ENCODE measurements at regions of chr14 and their contacts with region 1.

Region 1: GRCh38 chr14:106417224-106418049 is 891.1 kb downstream of the TMEM121 start:
- DNase-seq: peak; percentile 88
- H3K4me3 Mint-ChIP-seq: no peak overlapping the region
- H3K27ac Mint-ChIP-seq: no peak overlapping the region
- H3K4me1 Mint-ChIP-seq: peaks cover 7% of the 10 kb centered on the region
- H3K27me3 Mint-ChIP-seq: peaks cover 16% of the 10 kb centered on the region

Region 2: GRCh38 chr14:106308839-106309389 is 108.5 kb before region 1 on chr14:
- CTCF ChIA-PET with region 1: interaction called, 13 read pairs
- POLR2A ChIA-PET with region 1: no interaction called
- DNase-seq: peak; percentile 88
- H3K4me3 Mint-ChIP-seq: peak overlapping the region; percentile 43
- H3K27ac Mint-ChIP-seq: peak overlapping the region; percentile 61
- H3K4me1 Mint-ChIP-seq: no peaks in the 10 kb centered on the region
- H3K27me3 Mint-ChIP-seq: peaks cover 50% of the 10 kb centered on the region

Region 3: GRCh38 chr14:106378191-106378590 is 39.2 kb before region 1 on chr14:
- CTCF ChIA-PET with region 1: interaction called, 58 read pairs
- POLR2A ChIA-PET with region 1: no interaction called
- DNase-seq: peak; percentile 41
- H3K4me3 Mint-ChIP-seq: no peak overlapping the region
- H3K27ac Mint-ChIP-seq: no peak overlapping the region
- H3K4me1 Mint-ChIP-seq: peaks cover 20% of the 10 kb centered on the region
- H3K27me3 Mint-ChIP-seq: peaks cover 26% of the 10 kb centered on the region

Region 4: GRCh38 chr14:106436310-106436905 is 19.0 kb after region 1 on chr14:
- CTCF ChIA-PET with region 1: interaction called, 12 read pairs
- POLR2A ChIA-PET with region 1: no interaction called
- DNase-seq: peak; percentile 74
- H3K4me3 Mint-ChIP-seq: no peak overlapping the region
- H3K27ac Mint-ChIP-seq: no peak overlapping the region
- H3K4me1 Mint-ChIP-seq: peaks cover 8% of the 10 kb centered on the region
- H3K27me3 Mint-ChIP-seq: peaks cover 34% of the 10 kb centered on the region

Region 5: GRCh38 chr14:106501898-106502297 is 84.5 kb after region 1 on chr14:
- CTCF ChIA-PET with region 1: interaction called, 90 read pairs
- POLR2A ChIA-PET with region 1: no interaction called
- DNase-seq: no peak
- H3K4me3 Mint-ChIP-seq: no peak overlapping the region
- H3K27ac Mint-ChIP-seq: no peak overlapping the region
- H3K4me1 Mint-ChIP-seq: peaks cover 13% of the 10 kb centered on the region
- H3K27me3 Mint-ChIP-seq: peaks cover 21% of the 10 kb centered on the region

Region 6: DNA sequence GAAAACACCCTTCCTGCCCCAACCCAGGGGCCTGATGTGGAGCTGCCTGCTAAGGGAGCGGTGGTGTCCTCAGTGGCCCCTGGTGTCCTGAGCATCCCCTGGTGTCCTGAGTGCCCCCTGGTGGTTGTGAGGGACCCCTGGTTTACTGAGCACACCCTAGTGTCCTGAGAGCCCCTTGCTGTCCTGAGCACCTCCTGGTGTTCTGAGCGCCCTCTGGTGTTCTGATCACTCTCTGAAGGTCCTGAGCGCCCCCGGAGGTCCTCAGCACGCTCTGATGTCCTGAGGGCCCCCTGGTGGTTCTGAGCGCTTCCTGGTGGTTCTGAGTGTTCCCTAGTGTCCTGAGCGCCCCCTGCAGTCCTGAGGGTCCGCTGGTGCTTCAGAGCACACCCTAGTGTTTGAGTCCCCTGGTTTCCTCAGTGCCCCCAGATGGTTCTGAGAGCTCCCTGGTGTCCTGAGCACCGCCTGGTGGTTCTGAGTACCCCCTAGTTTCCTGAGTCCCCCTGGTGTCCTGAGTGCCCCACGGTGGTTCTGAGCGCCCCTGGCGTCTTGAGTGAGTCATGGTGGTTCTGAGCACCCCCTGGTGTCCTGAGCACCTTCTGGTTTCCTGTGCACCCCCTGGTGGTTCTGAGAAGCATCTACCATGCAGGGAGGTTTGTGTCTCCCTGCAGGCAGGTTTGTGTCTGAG is 113.1 kb after region 1 on chr14:
- CTCF ChIA-PET with region 1: interaction called, 41 read pairs
- POLR2A ChIA-PET with region 1: no interaction called
- DNase-seq: peak; percentile 32
- H3K4me3 Mint-ChIP-seq: no peak overlapping the region
- H3K27ac Mint-ChIP-seq: no peak overlapping the region
- H3K4me1 Mint-ChIP-seq: peaks cover 7% of the 10 kb centered on the region
- H3K27me3 Mint-ChIP-seq: peaks cover 40% of the 10 kb centered on the region

Region 7: DNA sequence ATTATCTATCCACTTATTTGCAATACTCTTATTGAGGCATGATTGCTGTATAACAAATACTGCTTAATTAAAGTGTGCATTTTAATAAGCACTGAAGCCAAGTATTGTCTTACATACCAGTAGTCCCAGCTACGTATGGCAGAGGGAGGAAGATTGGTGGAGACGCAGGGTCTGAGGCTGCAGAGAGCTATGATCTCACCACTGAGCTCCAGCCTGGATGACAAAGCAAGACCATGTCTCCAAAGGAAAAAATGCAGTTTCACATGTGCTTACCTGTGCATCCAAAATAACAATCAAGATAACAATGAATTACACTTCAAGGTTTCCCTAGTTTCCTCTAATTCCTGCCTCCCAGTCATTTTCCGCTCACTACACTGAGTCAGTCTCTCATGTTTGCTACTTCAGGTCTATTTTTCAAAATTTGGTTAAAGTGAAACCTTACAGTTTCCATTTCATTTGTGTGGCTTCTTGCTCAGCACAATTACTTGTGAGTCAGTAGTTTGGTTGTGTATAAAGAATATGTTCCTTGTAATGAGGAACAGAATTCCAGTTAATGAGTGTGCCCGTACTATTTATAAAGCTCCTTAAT is 359.1 kb after region 1 on chr14:
- CTCF ChIA-PET with region 1: no interaction called
- POLR2A ChIA-PET with region 1: no interaction called
- DNase-seq: no peak
- H3K4me3 Mint-ChIP-seq: no peak overlapping the region
- H3K27ac Mint-ChIP-seq: no peak overlapping the region
- H3K4me1 Mint-ChIP-seq: peaks cover 25% of the 10 kb centered on the region
- H3K27me3 Mint-ChIP-seq: no peaks in the 10 kb centered on the region

Measured in activated CD4-positive, alpha-beta T cell treated with anti-CD3 and anti-CD28 coated beads, Interleukin-2, amount 10 ng/mL, durations not matched to agents 7 days and 5 days (primary cell).